Posterior cingulate gyrus (tissue), 11 donors: ENCODE measurements at regions of chr2 and their contacts with region 1.

Region 1: GRCh38 chr2:31170071-31170698 is 31.9 kb upstream of the GALNT14 start:
- DNase-seq: peak; percentile 40 to 95 (median 70)

Region 2: GRCh38 chr2:30862054-30862651 is 308.0 kb before region 1 on chr2:
- intact Hi-C with region 1: loop called (anchors 10 kb)
- DNase-seq: peak in 8 of 10 donors; percentile 26 to 90 (median 64)

Region 3: GRCh38 chr2:31333527-31334183 is 163.5 kb after region 1 on chr2:
- intact Hi-C with region 1: loop called (anchors 10 kb)
- DNase-seq: peak; percentile 71 to 95 (median 89)